ENCODE measurements at regions of chr3 and their contacts with region 1.

Region 1: DNA sequence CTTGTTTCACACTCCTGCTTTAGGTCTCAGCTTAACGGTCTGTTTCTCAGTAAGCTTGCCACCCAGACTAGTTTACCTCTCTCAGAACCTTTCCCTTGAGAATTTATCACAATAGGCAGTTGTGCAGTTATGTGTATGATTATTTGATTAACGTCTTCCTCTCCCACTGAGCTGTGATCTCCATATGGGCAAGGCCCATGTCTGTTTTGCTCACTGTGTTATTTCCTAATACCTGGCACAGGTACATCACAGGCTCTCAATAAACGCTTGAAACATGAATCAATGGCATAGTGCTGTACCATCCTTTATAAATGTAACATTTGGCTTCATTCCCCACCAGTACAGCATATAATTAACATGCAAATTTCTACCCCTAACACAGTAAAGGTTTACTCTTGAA is 29.1 kb upstream of the RARRES1 start:
- DNase-seq: no peak
- ATAC-seq: no peak
- H3K4me3 ChIP-seq: no peak overlapping the region
- H3K27ac ChIP-seq: no peak overlapping the region
- H3K4me1 ChIP-seq: peaks cover 3% of the 10 kb centered on the region
- H3K27me3 ChIP-seq: no peaks in the 10 kb centered on the region
- CTCF ChIP-seq: no peak
- POLR2A ChIP-seq: no peak
- RAD21 ChIP-seq: no peak

Region 2: GRCh38 chr3:158748237-158748828 is 13.0 kb before region 1 on chr3:
- CTCF ChIA-PET with region 1: interaction called, 12 read pairs
- POLR2A ChIA-PET with region 1: no interaction called
- dilution Hi-C with region 1: no loop called
- in situ Hi-C with region 1: no loop called
- intact Hi-C with region 1: no loop called
- DNase-seq: peak; percentile 47
- ATAC-seq: peak; percentile 22; the same call in 1 of the 2 replicates
- H3K4me3 ChIP-seq: no peak overlapping the region
- H3K27ac ChIP-seq: no peak overlapping the region
- H3K4me1 ChIP-seq: peaks cover 16% of the 10 kb centered on the region
- H3K27me3 ChIP-seq: no peaks in the 10 kb centered on the region
- CTCF ChIP-seq: no peak
- POLR2A ChIP-seq: no peak
- RAD21 ChIP-seq: no peak

Measured in IMR-90 (cell line).